Activated CD4-positive, alpha-beta memory T cell treated with anti-CD3 and anti-CD28 coated beads, Interleukin-2, amount 10 ng/mL, durations not matched to agents 7 days and 5 days (primary cell): ENCODE measurements at regions of chr10 and their contacts with region 1.

Region 1: GRCh38 chr10:67849331-67850011 is 11.5 kb upstream of the DNAJC12 start:
- DNase-seq: peak; percentile 97
- H3K4me3 Mint-ChIP-seq: peak overlapping the region; percentile 86
- H3K27ac Mint-ChIP-seq: peak overlapping the region; percentile 92
- H3K4me1 Mint-ChIP-seq: peaks cover 19% of the 10 kb centered on the region
- H3K27me3 Mint-ChIP-seq: no peaks in the 10 kb centered on the region

Region 2: DNA sequence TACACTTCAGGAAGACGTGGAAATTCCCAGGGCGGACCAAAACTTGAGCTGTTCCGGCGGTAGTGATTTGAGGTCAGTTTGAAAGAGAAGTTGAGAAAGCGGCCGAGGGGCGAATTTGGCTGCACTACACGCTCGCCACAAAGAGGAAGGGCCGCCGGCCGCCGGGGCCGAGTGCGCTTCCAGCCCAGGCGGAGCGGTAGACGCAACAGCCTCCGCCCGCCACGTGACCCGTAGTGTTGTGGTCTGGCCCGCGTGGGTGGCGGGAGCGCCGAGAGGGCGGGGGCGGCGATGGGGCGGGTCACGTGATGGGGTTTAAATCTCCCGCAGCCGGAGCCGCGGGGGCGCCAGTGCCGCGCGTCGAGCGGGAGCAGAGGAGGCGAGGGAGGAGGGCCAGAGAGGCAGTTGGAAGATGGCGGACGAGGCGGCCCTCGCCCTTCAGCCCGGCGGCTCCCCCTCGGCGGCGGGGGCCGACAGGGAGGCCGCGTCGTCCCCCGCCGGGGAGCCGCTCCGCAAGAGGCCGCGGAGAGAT is 34.9 kb after region 1 on chr10 and contains the start of gene SIRT1:
- CTCF ChIA-PET with region 1: interaction called, 22 read pairs
- POLR2A ChIA-PET with region 1: interaction called, 26 read pairs
- DNase-seq: peak; percentile 94
- H3K4me3 Mint-ChIP-seq: peak within 1 kb of the TSS; percentile 94
- H3K27ac Mint-ChIP-seq: peak within 1 kb of the TSS; percentile 95
- H3K4me1 Mint-ChIP-seq: peaks cover 36% of the 10 kb centered on the region
- H3K27me3 Mint-ChIP-seq: no peaks in the 10 kb centered on the region
- total RNA-seq, gene SIRT1: 25.8 to 28.5 TPM